ENCODE measurements at regions of chr18 and their contacts with region 1.

Region 1: GRCh38 chr18:56678836-56679565 is 27.8 kb downstream of the WDR7 start:
- DNase-seq: peak; percentile 14
- H3K4me3 ChIP-seq: no peak overlapping the region
- H3K27ac ChIP-seq: peak overlapping the region in 1 of 4 donors; percentile 2
- H3K4me1 ChIP-seq: peaks cover 0 to 11% (median 5%) of the 10 kb centered on the region in 4 donors
- H3K27me3 ChIP-seq: no peaks in the 10 kb centered on the region
- CTCF ChIP-seq: no peak
- EP300 ChIP-seq: no peak
- POLR2A ChIP-seq: no peak

Region 2: DNA sequence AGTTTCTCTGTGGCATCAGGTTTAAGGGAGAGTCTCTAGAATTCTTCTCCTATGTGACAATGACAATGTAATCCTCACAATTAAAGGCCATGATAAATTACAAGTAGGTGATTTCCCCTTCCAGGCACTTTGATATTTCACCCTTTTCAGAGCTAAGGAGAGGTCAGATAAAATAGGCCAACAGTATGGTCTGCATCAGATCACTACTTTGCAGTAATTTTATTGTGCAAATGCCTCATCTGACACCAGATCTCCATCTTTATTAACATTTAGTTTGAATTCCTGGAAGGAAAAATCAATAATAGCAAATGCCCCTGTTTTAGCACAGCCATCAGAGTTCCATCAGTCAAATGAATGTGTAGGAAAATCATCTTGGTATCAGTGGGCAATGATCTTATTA is 1923.5 kb before region 1 on chr18:
- in situ Hi-C with region 1: no loop called
- intact Hi-C with region 1: loop called (anchors 5 kb)
- DNase-seq: no peak
- H3K4me3 ChIP-seq: no peak overlapping the region
- H3K27ac ChIP-seq: no peak overlapping the region
- H3K4me1 ChIP-seq: peaks cover 0 to 8% (median 3%) of the 10 kb centered on the region in 4 donors
- H3K27me3 ChIP-seq: no peaks in the 10 kb centered on the region
- CTCF ChIP-seq: no peak
- EP300 ChIP-seq: no peak
- POLR2A ChIP-seq: no peak

Region 3: GRCh38 chr18:56563568-56563967 is 115.4 kb before region 1 on chr18:
- in situ Hi-C with region 1: no loop called
- intact Hi-C with region 1: no loop called
- DNase-seq: no peak
- H3K4me3 ChIP-seq: no peak overlapping the region
- H3K27ac ChIP-seq: no peak overlapping the region
- H3K4me1 ChIP-seq: no peaks in the 10 kb centered on the region
- H3K27me3 ChIP-seq: no peaks in the 10 kb centered on the region
- CTCF ChIP-seq: no peak
- EP300 ChIP-seq: no peak
- POLR2A ChIP-seq: no peak

Measured in transverse colon (tissue), 4 donors.